ENCODE measurements at regions of chr11 and their contacts with region 1.

Region 1: GRCh38 chr11:65329944-65330403 is 3.7 kb upstream of the DPF2 start:
- DNase-seq: peak; percentile 79 to 92 (median 86)
- H3K4me3 ChIP-seq: peak overlapping the region in 1 of 3 experiments; percentile 43
- H3K4me3 Mint-ChIP-seq: peak overlapping the region; percentile 57 to 60
- H3K27ac ChIP-seq: peak overlapping the region in 1 of 2 donors; percentile 5
- H3K27ac Mint-ChIP-seq: peak overlapping the region; percentile 19 to 90 (median 82)
- H3K4me1 ChIP-seq: peaks cover 21 to 26% of the 10 kb centered on the region in 2 donors
- H3K4me1 Mint-ChIP-seq: peaks cover 23% of the 10 kb centered on the region
- H3K27me3 ChIP-seq: no peaks in the 10 kb centered on the region
- H3K27me3 Mint-ChIP-seq: peaks cover 3 to 8% (median 7%) of the 10 kb centered on the region in 3 donors
- CTCF ChIP-seq: peak; percentile 84

Region 2: GRCh38 chr11:65102142-65103095 is 227.6 kb before region 1 on chr11:
- intact Hi-C with region 1: no loop called
- DNase-seq: no peak
- H3K4me3 ChIP-seq: no peak overlapping the region
- H3K4me3 Mint-ChIP-seq: no peak overlapping the region
- H3K27ac ChIP-seq: no peak overlapping the region
- H3K27ac Mint-ChIP-seq: no peak overlapping the region
- H3K4me1 ChIP-seq: peaks cover 0 to 7% of the 10 kb centered on the region in 2 donors
- H3K4me1 Mint-ChIP-seq: peaks cover 5% of the 10 kb centered on the region
- H3K27me3 ChIP-seq: no peaks in the 10 kb centered on the region
- H3K27me3 Mint-ChIP-seq: no peaks in the 10 kb centered on the region
- CTCF ChIP-seq: no peak

Region 3: GRCh38 chr11:65274735-65275682 is 55.0 kb before region 1 on chr11:
- intact Hi-C with region 1: loop called in 1 of 2 experiments (anchors 5 kb)
- DNase-seq: peak; percentile 64 to 80 (median 72)
- H3K4me3 ChIP-seq: no peak overlapping the region
- H3K4me3 Mint-ChIP-seq: no peak overlapping the region
- H3K27ac ChIP-seq: no peak overlapping the region
- H3K27ac Mint-ChIP-seq: no peak overlapping the region
- H3K4me1 ChIP-seq: peaks cover 10 to 12% of the 10 kb centered on the region in 2 donors
- H3K4me1 Mint-ChIP-seq: peaks cover 15% of the 10 kb centered on the region
- H3K27me3 ChIP-seq: no peaks in the 10 kb centered on the region
- H3K27me3 Mint-ChIP-seq: peaks cover 0 to 2% (median 1%) of the 10 kb centered on the region in 3 donors
- CTCF ChIP-seq: peak; percentile 93

Measured in CD14-positive monocyte (primary cell).